Calu3 (cell line): ENCODE measurements at regions of chr7 and their contacts with region 1.

Region 1: GRCh38 chr7:13920053-13920697 is 69.3 kb downstream of the ETV1 start:
- DNase-seq: peak; percentile 89
- H3K4me3 Mint-ChIP-seq: peak overlapping the region; percentile 47
- H3K27ac Mint-ChIP-seq: peak overlapping the region; percentile 94
- H3K4me1 Mint-ChIP-seq: peaks cover 18% of the 10 kb centered on the region
- H3K27me3 Mint-ChIP-seq: no peaks in the 10 kb centered on the region
- CTCF ChIP-seq: no peak

Region 2: DNA sequence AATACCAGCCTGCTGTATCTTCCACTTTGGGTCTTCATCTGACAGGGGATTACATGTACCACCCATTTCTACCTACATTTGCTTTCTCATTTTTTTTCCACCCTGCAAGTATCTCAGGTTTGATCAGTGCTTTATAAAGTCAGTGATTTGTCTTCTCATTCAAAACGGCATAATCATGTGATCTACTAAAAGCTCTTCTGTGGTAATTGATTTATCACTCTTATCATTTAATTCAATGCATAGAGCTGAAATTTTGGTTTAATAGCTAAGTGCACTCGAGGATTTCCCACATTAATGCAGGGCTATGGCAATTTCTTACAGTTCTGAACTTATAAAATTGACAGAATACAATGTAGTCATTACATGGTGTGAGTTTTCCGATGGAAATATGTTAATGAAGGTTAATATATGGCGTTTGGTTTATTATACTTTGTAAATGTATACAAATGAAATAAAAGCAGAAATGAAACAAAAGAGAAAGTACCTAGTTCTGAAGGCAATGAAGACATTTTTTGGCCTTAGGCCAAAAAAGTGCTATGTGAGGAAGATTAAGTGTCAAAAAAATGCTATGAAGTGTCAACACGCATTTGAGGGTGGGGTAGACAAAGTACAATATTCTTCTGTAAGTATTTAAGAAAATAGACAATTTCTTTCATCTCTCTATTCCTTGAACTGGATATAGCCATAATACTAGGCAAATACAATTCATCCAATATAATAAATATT is 388.0 kb before region 1 on chr7:
- CTCF ChIA-PET with region 1: no interaction called
- intact Hi-C with region 1: loop called (anchors 5 kb)
- DNase-seq: no peak
- H3K4me3 Mint-ChIP-seq: no peak overlapping the region
- H3K27ac Mint-ChIP-seq: no peak overlapping the region
- H3K4me1 Mint-ChIP-seq: no peaks in the 10 kb centered on the region
- H3K27me3 Mint-ChIP-seq: no peaks in the 10 kb centered on the region
- CTCF ChIP-seq: no peak

Region 3: DNA sequence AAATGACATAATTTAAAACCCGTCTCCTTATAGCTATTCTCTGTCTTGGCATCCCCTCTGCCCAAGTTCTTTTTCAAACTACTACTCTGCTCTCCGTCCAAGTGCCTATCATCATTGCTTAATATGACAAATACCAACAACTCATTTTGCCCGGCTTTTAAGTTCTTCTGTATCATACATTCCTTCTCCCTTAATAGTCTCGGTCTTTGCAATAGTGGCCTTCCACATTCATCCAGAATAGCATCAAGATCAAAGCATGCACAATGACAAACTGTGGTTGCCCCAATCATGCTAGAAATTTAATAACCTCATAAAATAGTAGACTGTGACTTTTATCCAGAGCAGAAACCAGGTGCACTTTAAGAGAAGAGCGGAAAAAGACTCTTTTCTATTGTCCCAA is 129.6 kb before region 1 on chr7:
- CTCF ChIA-PET with region 1: no interaction called
- intact Hi-C with region 1: loop called (anchors 5 kb)
- DNase-seq: no peak
- H3K4me3 Mint-ChIP-seq: no peak overlapping the region
- H3K27ac Mint-ChIP-seq: no peak overlapping the region
- H3K4me1 Mint-ChIP-seq: no peaks in the 10 kb centered on the region
- H3K27me3 Mint-ChIP-seq: no peaks in the 10 kb centered on the region
- CTCF ChIP-seq: no peak

Region 4: DNA sequence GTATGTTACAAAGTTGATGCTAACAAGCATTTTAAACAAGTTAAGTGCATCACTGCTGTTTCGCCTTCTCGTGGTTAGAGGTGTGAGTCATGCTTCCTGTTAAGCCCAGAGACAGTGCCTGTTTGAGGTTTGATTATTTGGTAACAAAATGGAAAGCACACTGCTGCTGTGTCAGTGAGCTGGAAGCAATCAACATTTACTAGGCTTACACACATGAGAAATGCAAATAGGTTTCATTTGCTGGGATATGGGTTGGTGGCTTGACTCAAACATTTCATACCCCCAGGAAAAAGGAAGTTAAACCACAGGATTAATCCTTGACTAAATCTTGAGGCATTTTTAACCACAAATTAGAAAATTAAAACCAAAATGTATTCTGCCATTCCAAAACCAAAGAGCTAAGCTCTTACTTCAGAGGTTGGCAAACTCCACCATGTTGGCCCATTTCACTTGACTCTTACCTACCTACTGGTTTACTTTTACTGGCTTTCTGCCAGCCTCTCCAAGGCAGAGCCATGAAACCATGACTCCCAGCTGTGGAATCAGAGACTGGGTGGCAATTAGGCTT is 69.9 kb before region 1 on chr7:
- CTCF ChIA-PET with region 1: no interaction called
- intact Hi-C with region 1: loop called (anchors 1 kb)
- DNase-seq: peak; percentile 64
- H3K4me3 Mint-ChIP-seq: peak overlapping the region; percentile 1
- H3K27ac Mint-ChIP-seq: peak overlapping the region; percentile 37
- H3K4me1 Mint-ChIP-seq: peaks cover 20% of the 10 kb centered on the region
- H3K27me3 Mint-ChIP-seq: no peaks in the 10 kb centered on the region
- CTCF ChIP-seq: no peak

Region 5: DNA sequence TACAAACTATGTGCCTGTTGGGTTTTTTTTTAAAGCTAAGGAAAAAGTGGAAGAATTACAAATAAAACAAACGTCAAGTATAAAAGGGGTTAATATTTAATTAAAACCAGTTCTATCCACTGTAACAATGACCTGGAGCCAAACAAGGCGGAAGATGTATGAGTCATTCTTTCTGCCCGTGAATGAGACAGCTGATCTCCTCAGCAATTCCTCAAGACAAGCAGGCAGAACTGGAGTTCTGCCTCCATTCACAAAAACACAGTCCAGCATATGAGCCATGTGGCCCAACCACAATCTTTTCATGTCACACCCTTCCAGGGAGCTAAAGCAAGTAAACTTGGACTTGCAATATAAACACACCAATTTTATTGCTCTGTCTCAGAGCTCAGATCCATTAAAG is 60.9 kb after region 1 on chr7:
- CTCF ChIA-PET with region 1: interaction called, 3 read pairs
- intact Hi-C with region 1: loop called (anchors 2 kb)
- DNase-seq: peak; percentile 74
- H3K4me3 Mint-ChIP-seq: peak overlapping the region; percentile 59
- H3K27ac Mint-ChIP-seq: peak overlapping the region; percentile 87
- H3K4me1 Mint-ChIP-seq: peaks cover 34% of the 10 kb centered on the region
- H3K27me3 Mint-ChIP-seq: no peaks in the 10 kb centered on the region
- CTCF ChIP-seq: no peak